H1 (cell line): ENCODE measurements at regions of chr7 and their contacts with region 1.

Region 1: DNA sequence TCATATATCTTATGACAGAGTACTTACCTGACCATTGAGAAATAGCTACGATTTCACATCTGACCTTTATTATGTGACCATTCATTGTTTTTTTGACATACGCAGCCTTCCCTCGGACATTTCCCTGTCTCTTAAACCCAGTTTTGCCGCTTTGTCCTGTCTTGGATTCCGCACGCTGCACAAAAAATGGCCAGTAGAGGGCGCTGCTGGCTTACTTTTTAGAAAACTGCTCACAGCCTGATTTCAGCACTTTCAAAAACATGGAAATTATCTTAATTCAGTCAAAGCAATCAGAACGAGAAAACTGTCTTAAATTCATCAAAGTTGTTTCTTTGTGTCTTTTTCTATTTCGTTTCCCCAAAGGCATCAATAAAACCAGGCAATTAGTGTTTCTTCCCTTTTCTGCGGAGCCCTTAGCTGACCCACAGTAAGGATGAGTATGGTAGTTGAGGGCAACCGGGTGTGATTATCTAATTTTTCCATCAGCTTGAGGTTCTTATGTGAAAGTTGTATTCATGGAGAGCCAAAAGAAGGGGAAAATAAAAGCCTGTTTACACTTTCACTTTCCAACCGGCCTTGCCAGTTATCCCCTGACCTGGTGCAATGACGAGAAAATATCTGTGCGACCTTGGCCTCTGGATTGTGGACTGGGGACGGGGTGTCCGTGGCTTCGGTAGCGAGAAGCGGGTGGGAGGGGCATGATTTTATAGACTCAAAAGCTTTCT is 144.4 kb downstream of the DYNC1I1 start:
- DNase-seq: peak; percentile 34 to 93
- H3K4me3 ChIP-seq: no peak overlapping the region
- H3K27ac ChIP-seq: no peak overlapping the region
- H3K4me1 ChIP-seq: no peaks in the 10 kb centered on the region
- H3K27me3 ChIP-seq: no peaks in the 10 kb centered on the region
- CTCF ChIP-seq: peak; percentile 51 to 82 (median 79)
- EP300 ChIP-seq: no peak
- POLR2A ChIP-seq: no peak
- RAD21 ChIP-seq: peak; percentile 87 to 93

Region 2: GRCh38 chr7:95723592-95724180 is 193.0 kb before region 1 on chr7:
- CTCF ChIA-PET with region 1: interaction called, 11 read pairs
- POLR2A ChIA-PET with region 1: no interaction called
- DNase-seq: peak; percentile 25 to 52
- H3K4me3 ChIP-seq: no peak overlapping the region
- H3K27ac ChIP-seq: no peak overlapping the region
- H3K4me1 ChIP-seq: peaks cover 0 to 2% (median 0%) of the 10 kb centered on the region in 4 experiments; a peak in 1 of 7 replicates
- H3K27me3 ChIP-seq: no peaks in the 10 kb centered on the region; a peak in 1 of 7 replicates
- CTCF ChIP-seq: peak; percentile 23 to 80 (median 61)
- EP300 ChIP-seq: no peak
- POLR2A ChIP-seq: no peak
- RAD21 ChIP-seq: peak; percentile 92 to 94

Region 3: DNA sequence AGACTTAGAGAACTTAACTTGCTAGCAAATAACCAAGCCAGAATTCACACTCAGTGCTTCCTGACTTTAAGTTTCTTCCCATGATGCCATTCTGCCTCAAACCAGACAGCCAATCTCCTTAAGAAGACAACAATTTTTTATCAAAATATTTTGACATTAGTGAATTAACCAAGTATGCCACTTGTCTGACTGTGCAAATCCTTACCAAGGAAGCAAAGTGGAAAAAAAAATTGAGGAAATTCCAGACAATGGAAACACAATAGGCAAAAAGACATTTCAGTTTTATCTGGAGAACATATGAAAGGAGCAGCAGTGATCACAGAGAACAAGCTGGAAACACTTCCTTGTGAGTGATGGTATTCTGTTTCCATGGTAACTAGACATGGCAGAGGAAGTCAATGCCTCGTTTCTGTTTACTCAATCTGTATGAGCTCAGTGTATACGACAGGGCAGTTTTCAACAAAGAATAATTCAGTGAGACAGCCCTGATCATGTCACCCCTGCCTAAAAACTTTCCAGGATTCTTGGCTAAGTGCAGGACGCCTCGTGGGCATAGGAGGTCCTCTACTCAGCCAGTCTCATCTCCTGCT is 30.1 kb before region 1 on chr7:
- CTCF ChIA-PET with region 1: no interaction called
- POLR2A ChIA-PET with region 1: no interaction called
- DNase-seq: no peak
- H3K4me3 ChIP-seq: no peak overlapping the region
- H3K27ac ChIP-seq: no peak overlapping the region
- H3K4me1 ChIP-seq: no peaks in the 10 kb centered on the region
- H3K27me3 ChIP-seq: no peaks in the 10 kb centered on the region
- CTCF ChIP-seq: no peak
- EP300 ChIP-seq: no peak
- POLR2A ChIP-seq: no peak
- RAD21 ChIP-seq: no peak

Region 4: GRCh38 chr7:95905165-95905564 is 11.6 kb before region 1 on chr7:
- CTCF ChIA-PET with region 1: interaction called, 25 read pairs
- POLR2A ChIA-PET with region 1: no interaction called
- DNase-seq: no peak
- H3K4me3 ChIP-seq: no peak overlapping the region
- H3K27ac ChIP-seq: no peak overlapping the region
- H3K4me1 ChIP-seq: peaks cover 2 to 8% (median 4%) of the 10 kb centered on the region in 4 experiments; a peak in 4 of 7 replicates
- H3K27me3 ChIP-seq: peaks cover 0 to 3% (median 0%) of the 10 kb centered on the region in 4 experiments; a peak in 1 of 7 replicates
- CTCF ChIP-seq: no peak
- EP300 ChIP-seq: no peak
- POLR2A ChIP-seq: no peak
- RAD21 ChIP-seq: no peak

Region 5: DNA sequence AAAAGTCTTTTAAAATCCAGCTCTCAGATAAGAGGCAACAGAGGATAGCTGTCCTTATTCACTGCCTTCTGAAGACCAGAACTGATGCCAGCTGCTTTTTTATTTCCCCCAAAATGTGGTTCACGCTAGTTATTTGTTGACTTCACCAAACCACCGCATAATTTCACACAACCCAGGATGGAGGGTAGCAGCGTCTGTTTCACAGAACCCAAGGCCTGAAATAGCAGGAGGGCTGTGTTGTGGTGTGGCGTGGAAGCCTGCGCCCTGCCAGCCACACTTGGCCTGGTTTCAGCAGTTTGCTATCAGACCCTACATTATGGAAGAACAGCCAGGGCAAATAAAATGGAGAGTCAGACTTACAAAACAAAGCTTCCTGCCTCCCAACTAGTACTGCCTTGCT is 11.0 kb after region 1 on chr7:
- CTCF ChIA-PET with region 1: interaction called, 38 read pairs
- POLR2A ChIA-PET with region 1: no interaction called
- DNase-seq: no peak
- H3K4me3 ChIP-seq: no peak overlapping the region
- H3K27ac ChIP-seq: no peak overlapping the region
- H3K4me1 ChIP-seq: no peaks in the 10 kb centered on the region
- H3K27me3 ChIP-seq: no peaks in the 10 kb centered on the region
- CTCF ChIP-seq: no peak
- EP300 ChIP-seq: no peak
- POLR2A ChIP-seq: no peak
- RAD21 ChIP-seq: no peak